Activated naive CD4-positive, alpha-beta T cell treated with anti-CD3 and anti-CD28 coated beads for 36 hours (primary cell): ENCODE measurements at regions of chr3 and their contacts with region 1.

Region 1: DNA sequence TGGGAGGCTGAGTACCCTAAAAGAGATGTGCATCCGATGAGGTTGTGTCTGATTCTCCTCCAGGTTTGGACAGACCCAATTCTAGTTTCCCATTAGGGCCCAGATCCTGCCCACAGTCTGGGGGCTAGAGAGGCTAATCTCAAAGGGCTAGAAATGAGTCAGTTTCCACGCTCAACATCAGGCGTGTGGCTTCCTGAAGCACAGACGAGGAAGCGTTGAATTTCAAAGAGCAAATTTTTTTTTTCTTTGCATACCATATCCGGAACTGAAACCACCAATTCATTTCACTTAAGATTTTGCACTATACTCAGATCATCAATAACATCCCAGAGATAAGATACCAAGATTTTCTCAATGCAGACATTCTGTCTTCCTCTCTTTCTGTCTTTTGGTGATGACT is 173.8 kb upstream of the BCL6 start:
- DNase-seq: peak; percentile 77
- H3K4me3 Mint-ChIP-seq: peak overlapping the region; percentile 60
- H3K27ac Mint-ChIP-seq: peak overlapping the region; percentile 94
- H3K4me1 Mint-ChIP-seq: peaks cover 83% of the 10 kb centered on the region
- H3K27me3 Mint-ChIP-seq: no peaks in the 10 kb centered on the region

Region 2: DNA sequence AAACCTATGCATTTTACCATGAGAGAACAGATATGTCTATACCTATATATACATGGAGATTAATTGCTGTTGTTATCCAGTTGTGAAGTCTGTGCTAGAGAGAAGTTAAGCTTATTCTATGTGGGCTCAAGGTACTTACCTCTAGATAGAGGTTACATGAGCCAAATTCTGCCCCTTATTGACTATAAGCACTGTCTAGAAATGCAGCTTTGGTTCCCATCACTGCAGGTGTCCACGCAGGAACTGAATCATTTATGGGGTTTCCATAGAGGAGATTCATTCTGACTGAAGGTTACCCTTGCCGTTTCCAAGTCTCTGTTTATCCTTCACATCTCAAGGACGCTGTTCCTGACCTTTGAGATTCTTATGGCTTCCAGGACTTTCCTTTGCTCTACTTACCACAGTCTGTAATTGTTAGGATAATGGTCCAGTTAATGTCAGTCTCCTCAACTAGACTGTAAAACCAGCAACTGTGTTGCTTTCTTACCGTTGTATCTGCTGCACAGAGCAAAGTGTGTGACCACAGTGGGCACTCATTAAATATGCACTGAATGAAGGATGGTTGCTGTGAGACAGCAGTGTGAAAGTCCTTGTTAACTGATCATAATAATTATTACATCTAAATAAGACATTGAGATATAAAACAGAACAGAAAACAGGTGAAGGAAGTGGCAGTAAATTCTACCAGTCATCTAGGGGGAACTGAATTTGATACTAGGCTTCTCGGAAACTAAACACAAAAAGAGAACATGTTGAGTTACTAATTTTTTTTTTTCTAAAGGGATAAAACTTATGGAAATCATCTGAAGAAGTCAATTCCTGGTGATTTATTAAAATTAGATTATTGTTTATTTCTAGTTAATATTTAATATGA is 129.8 kb before region 1 on chr3:
- CTCF ChIA-PET with region 1: no interaction called
- intact Hi-C with region 1: loop called (anchors 1 kb)
- DNase-seq: peak; percentile 59
- H3K4me3 Mint-ChIP-seq: no peak overlapping the region
- H3K27ac Mint-ChIP-seq: peak overlapping the region; percentile 69
- H3K4me1 Mint-ChIP-seq: peaks cover 28% of the 10 kb centered on the region
- H3K27me3 Mint-ChIP-seq: no peaks in the 10 kb centered on the region

Region 3: DNA sequence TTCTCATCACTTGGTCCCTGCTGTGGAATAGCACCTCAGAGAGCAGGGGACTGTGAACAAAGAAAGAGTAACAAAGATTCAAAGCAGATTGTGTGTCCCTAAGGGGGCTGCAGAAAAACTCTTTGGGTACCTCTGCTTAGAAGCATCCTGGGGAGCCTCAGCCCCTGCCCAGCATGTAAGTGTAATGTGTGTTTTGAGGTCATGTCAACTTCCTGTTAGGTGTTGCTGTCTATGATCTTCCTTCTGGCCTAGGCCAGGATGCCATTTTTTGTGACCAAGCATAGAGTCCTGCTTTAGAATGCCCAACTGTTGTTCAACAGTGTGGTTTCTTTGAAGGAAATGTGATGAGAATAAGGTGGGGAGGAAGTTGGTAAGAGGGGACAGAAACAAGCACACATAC is 96.6 kb before region 1 on chr3:
- CTCF ChIA-PET with region 1: no interaction called
- intact Hi-C with region 1: no loop called
- DNase-seq: no peak
- H3K4me3 Mint-ChIP-seq: no peak overlapping the region
- H3K27ac Mint-ChIP-seq: no peak overlapping the region
- H3K4me1 Mint-ChIP-seq: peaks cover 9% of the 10 kb centered on the region
- H3K27me3 Mint-ChIP-seq: no peaks in the 10 kb centered on the region

Region 4: DNA sequence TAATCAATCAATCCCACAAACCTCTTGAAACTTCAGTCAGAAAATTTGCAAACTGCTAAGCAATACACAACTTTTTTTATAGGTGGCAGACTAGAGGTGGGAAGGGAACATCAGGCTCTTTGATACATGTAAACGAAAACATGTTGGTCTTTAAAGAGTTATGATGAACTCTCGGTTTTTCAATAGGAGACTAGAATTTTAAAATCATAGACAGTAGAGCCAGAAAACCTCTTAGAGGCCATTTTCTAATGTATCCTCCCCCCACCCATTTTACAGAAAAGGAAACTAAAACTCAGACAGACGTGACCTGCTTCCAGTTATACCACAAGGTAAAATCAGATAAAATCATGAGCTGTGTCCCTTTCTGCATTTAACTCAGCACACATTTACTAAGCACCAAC is 55.8 kb after region 1 on chr3:
- CTCF ChIA-PET with region 1: interaction called, 4 read pairs
- intact Hi-C with region 1: loop called (anchors 1 kb)
- DNase-seq: no peak
- H3K4me3 Mint-ChIP-seq: peak overlapping the region; percentile 50
- H3K27ac Mint-ChIP-seq: peak overlapping the region; percentile 82
- H3K4me1 Mint-ChIP-seq: peaks cover 50% of the 10 kb centered on the region
- H3K27me3 Mint-ChIP-seq: no peaks in the 10 kb centered on the region

Region 5: GRCh38 chr3:188111002-188111584 is 192.0 kb after region 1 on chr3:
- CTCF ChIA-PET with region 1: no interaction called
- intact Hi-C with region 1: no loop called
- DNase-seq: no peak
- H3K4me3 Mint-ChIP-seq: no peak overlapping the region
- H3K27ac Mint-ChIP-seq: no peak overlapping the region
- H3K4me1 Mint-ChIP-seq: peaks cover 3% of the 10 kb centered on the region
- H3K27me3 Mint-ChIP-seq: no peaks in the 10 kb centered on the region

Region 6: GRCh38 chr3:188164248-188164687 is 245.2 kb after region 1 on chr3:
- CTCF ChIA-PET with region 1: no interaction called
- intact Hi-C with region 1: loop called (anchors 2 kb)
- DNase-seq: peak; percentile 60
- H3K4me3 Mint-ChIP-seq: no peak overlapping the region
- H3K27ac Mint-ChIP-seq: no peak overlapping the region
- H3K4me1 Mint-ChIP-seq: peaks cover 53% of the 10 kb centered on the region
- H3K27me3 Mint-ChIP-seq: no peaks in the 10 kb centered on the region

Region 7: GRCh38 chr3:188185717-188186251 is 266.7 kb after region 1 on chr3:
- CTCF ChIA-PET with region 1: no interaction called
- intact Hi-C with region 1: no loop called
- DNase-seq: peak; percentile 49
- H3K4me3 Mint-ChIP-seq: no peak overlapping the region
- H3K27ac Mint-ChIP-seq: no peak overlapping the region
- H3K4me1 Mint-ChIP-seq: peaks cover 40% of the 10 kb centered on the region
- H3K27me3 Mint-ChIP-seq: no peaks in the 10 kb centered on the region

Region 8: GRCh38 chr3:188320757-188321156 is 401.7 kb after region 1 on chr3:
- CTCF ChIA-PET with region 1: interaction called, 4 read pairs
- intact Hi-C with region 1: loop called (anchors 1 kb)
- DNase-seq: no peak
- H3K4me3 Mint-ChIP-seq: no peak overlapping the region
- H3K27ac Mint-ChIP-seq: no peak overlapping the region
- H3K4me1 Mint-ChIP-seq: peaks cover 49% of the 10 kb centered on the region
- H3K27me3 Mint-ChIP-seq: no peaks in the 10 kb centered on the region

Region 9: DNA sequence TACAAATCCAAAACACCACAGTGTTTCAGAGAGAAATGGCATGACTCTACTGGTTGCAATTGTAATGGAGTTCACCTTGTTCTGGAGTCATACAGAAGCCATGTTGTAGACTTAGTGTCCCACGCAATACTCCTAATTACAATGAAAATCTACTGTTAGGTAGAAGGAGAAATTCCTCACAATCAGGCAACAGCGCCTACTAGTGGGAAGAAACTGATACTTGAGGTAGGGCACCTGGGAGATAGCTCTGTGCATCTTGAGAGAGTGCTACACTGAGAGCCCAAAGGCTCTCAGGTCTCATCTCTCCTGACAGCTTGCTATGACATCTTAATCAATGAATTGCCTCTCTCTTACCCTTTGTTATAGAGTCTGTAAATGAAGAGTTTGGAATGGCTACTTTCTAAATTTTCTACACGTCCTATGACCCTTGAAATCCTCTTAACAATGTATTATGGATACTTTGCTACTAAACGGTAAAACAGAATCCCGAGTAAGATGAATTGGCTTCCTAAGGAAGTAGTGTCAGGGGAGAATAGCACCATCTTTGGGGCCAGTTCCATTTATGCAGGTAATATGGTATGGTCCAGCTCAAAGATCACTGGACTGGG is 830.1 kb after region 1 on chr3:
- CTCF ChIA-PET with region 1: no interaction called
- intact Hi-C with region 1: loop called (anchors 2 kb)
- DNase-seq: peak; percentile 66
- H3K4me3 Mint-ChIP-seq: no peak overlapping the region
- H3K27ac Mint-ChIP-seq: no peak overlapping the region
- H3K4me1 Mint-ChIP-seq: peaks cover 29% of the 10 kb centered on the region
- H3K27me3 Mint-ChIP-seq: no peaks in the 10 kb centered on the region